ENCODE measurements at regions of chr20 and their contacts with region 1.

Region 1: DNA sequence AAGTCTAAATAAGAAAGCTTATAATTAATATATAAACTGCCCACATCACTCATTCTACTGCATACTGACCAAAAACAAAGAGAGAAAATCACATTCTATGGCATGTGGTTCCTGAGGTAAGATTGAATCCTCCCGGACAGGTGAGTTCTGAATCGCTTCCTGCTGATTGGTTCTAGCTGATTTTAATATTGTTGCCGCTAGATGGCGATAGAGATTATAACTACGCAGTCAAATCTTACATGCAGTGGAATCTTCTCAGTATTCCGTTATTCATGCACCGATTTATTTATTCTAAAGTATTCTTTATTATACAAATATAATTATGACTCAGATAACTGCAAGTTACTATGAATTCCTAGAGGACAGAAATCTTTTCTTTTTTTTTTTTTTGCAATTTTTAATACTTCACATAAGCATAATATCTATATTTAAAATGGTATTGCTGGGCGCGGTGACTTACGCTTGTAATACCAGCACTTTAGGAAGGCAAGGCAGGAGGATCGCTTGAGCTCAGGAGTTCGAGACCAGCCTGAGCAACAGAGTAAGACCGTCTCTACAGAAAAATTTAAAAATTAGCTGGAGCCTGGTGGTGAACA is 24.2 kb upstream of the TMX4 start:
- DNase-seq: peak; percentile 44
- H3K4me3 ChIP-seq: no peak overlapping the region
- H3K27ac ChIP-seq: no peak overlapping the region
- H3K4me1 ChIP-seq: peaks cover 0 to 6% of the 10 kb centered on the region in 2 experiments; a peak in 2 of 4 replicates
- H3K27me3 ChIP-seq: no peaks in the 10 kb centered on the region
- CTCF ChIP-seq: peak; percentile 81
- EP300 ChIP-seq: no peak
- RAD21 ChIP-seq: peak; percentile 83

Region 2: DNA sequence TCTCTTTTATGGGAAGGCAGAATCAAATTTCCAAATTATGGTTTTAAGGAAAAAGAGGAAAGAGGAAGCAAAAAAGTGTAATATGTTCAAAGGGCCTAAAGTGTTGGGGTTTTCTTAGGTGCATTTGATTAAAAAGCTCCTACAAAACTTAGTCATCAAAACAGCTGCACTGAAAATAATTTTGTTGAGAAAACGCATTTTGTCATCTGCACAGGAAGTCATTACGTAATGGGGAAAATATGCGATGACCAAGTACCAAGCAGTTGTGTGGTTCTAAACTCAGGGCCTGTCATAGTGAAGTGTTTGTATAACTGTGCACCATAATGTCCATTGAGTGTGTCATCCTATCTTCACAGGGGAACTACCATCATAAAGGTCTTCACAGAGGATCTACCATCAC is 119.1 kb before region 1 on chr20:
- CTCF ChIA-PET with region 1: no interaction called
- POLR2A ChIA-PET with region 1: no interaction called
- DNase-seq: no peak
- H3K4me3 ChIP-seq: no peak overlapping the region
- H3K27ac ChIP-seq: no peak overlapping the region; a peak in 1 of 4 replicates
- H3K4me1 ChIP-seq: peaks cover 0 to 11% of the 10 kb centered on the region in 2 experiments; a peak in 1 of 4 replicates
- H3K27me3 ChIP-seq: no peaks in the 10 kb centered on the region
- CTCF ChIP-seq: no peak
- EP300 ChIP-seq: 0 out of 4 replicates have a peak, but pooled peaks of 1 of the 2 experiments have one; percentile 13
- RAD21 ChIP-seq: no peak

Region 3: DNA sequence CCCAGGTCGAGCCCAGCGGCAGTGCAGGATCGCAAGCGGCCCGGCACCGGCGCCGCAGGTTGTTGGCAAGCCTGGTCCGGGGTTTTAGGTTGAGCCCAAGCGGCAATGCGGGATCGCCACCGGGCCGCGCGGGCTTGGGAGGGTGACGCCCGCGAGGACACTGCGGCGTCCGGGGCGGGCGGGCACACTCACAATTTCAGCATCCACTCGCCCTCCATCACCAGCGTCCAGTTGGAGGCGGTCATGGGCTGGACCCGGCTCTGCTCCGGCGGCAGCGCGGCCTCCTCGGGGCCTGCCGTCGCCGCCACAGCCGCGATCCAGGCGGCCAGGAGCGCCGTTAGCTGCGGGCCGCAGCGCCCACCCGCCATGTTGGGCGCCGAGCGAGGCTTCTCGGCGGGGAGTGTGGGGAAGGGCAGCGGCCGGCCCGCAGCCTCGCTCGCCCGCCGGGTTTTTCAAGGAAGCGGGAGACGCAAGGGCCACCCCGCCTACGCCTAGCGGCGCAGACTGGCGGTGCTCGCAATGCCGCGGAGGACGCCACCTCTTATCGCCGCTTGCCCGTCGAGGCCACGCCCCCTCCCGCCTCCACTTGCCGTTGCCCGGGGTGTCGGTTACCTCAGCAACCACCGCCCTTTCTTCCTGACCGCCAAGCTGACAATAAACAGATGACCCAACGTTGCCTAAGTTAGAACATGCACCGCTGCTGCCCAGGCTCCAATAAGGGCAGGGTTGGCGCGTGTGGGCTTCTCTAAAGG is 24.4 kb before region 1 on chr20 and contains the start of gene TMX4:
- CTCF ChIA-PET with region 1: interaction called, 17 read pairs
- POLR2A ChIA-PET with region 1: no interaction called
- DNase-seq: peak; percentile 96
- H3K4me3 ChIP-seq: peak within 1 kb of the TSS; percentile 82 to 93
- H3K27ac ChIP-seq: peak within 1 kb of the TSS; percentile 84 to 98
- H3K4me1 ChIP-seq: peaks cover 16 to 18% of the 10 kb centered on the region in 2 experiments; a peak in 3 of 4 replicates
- H3K27me3 ChIP-seq: no peaks in the 10 kb centered on the region
- CTCF ChIP-seq: peak; percentile 52
- EP300 ChIP-seq: peak; percentile 5 to 77; a peak in 2 of 4 replicates
- RAD21 ChIP-seq: peak; percentile 18; the same call in 1 of the 2 replicates
- polyA plus RNA-seq, gene TMX4: 10.9 and 14.6 TPM in 2 replicates

Region 4: DNA sequence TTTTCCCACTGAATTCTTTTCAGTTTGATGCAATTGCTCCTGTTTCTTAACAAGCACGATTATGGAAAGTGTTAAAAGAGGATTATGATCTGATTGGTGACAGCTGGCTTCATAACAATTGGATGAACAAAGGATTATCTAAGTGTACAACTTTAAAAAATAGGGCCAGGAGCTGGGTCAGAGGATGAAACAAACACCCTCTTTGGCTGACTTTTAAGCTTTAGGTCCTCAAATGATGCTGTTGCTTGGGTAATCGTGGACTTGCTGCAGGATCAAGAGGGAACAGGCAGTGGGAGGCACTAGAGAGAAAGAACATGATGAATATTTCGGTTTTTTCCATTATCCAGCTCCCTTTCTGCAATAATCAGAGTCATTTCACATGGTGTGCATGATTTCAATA is 11.3 kb after region 1 on chr20:
- CTCF ChIA-PET with region 1: interaction called, 10 read pairs
- POLR2A ChIA-PET with region 1: no interaction called
- DNase-seq: no peak
- H3K4me3 ChIP-seq: no peak overlapping the region
- H3K27ac ChIP-seq: no peak overlapping the region
- H3K4me1 ChIP-seq: no peaks in the 10 kb centered on the region
- H3K27me3 ChIP-seq: no peaks in the 10 kb centered on the region
- CTCF ChIP-seq: no peak
- EP300 ChIP-seq: no peak
- RAD21 ChIP-seq: no peak

Region 5: DNA sequence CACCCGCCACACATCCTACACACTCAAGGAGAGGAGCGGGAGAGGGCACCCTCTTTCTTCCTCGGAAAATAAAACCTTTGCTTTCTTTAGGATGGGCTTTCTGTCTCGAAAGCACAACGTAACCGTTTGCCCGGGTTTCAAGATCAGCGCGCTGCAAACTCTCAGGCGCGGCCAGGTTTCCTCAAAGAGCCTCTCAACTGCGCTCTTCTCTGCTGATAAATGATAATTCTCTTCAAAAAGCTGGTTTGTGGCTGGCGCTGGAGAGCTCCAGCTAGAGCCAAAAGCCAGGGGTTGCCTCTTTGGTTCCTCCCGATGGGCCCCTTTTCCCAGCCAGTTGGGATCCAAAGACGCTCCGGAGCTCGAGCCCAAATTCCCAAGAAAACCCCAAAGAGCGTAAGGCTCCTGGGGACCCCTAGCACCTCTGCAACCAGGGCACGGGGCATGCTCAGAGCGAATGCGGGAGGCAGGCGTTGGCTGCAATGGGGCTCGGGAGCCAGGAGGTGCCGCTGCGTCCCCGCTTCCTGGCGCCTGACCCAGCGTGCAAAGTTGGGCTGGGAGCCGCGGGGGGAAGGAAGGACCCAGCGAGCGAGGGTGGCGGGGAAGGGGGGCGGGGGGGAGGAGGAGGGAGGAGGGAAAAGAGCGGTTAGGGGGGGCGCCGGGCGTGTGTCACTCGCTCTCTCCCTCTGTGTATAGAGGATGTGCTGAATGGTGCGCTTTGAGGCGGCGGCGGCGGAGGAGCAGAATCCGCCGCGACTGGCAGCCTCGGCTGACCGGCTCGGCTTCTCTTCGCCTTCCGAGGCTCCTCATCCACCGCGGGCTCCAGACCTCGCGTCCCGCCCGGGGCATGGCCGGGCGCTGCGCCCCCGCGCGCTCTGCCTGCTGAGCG is 88.1 kb after region 1 on chr20 and contains the start of gene PLCB1:
- CTCF ChIA-PET with region 1: interaction called, 16 read pairs
- POLR2A ChIA-PET with region 1: no interaction called
- DNase-seq: peak; percentile 96
- H3K4me3 ChIP-seq: peak within 1 kb of the TSS; percentile 82 to 84
- H3K27ac ChIP-seq: peak within 1 kb of the TSS; percentile 50 to 86; a peak in 3 of 4 replicates
- H3K4me1 ChIP-seq: peaks cover 17% of the 10 kb centered on the region in 2 experiments; a peak in 3 of 4 replicates
- H3K27me3 ChIP-seq: no peaks in the 10 kb centered on the region
- CTCF ChIP-seq: peak; percentile 82
- EP300 ChIP-seq: 0 out of 4 replicates have a peak, but pooled peaks of 1 of the 2 experiments have one; percentile 12
- RAD21 ChIP-seq: peak; percentile 90
- polyA plus RNA-seq, gene PLCB1: 10.5 and 13.0 TPM in 2 replicates

Region 6: DNA sequence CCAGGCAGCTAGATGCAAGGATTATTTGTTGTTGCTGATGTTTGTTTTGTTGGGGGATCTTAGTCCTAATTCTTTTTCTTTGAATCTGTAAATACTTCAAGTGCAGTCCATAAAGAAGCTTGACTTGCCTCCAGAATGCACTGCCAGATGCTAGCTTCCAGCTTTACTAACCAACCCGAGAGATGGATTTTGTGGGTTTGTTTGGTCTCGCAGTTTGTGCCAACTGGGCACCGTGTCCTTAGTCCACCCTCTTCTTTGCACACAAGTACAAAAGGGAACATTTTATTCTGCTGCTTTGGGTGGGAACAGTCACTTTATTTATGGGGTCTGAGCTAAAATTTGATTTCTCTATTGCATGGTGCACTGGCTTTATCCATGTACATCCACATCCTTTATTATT is 300.3 kb after region 1 on chr20:
- CTCF ChIA-PET with region 1: no interaction called
- POLR2A ChIA-PET with region 1: no interaction called
- DNase-seq: no peak
- H3K4me3 ChIP-seq: no peak overlapping the region
- H3K27ac ChIP-seq: no peak overlapping the region
- H3K4me1 ChIP-seq: peaks cover 0 to 10% of the 10 kb centered on the region in 2 experiments; a peak in 2 of 4 replicates
- H3K27me3 ChIP-seq: no peaks in the 10 kb centered on the region
- CTCF ChIP-seq: no peak
- EP300 ChIP-seq: no peak
- RAD21 ChIP-seq: no peak

Region 7: GRCh38 chr20:8389381-8390036 is 345.7 kb after region 1 on chr20:
- CTCF ChIA-PET with region 1: interaction called, 11 read pairs
- POLR2A ChIA-PET with region 1: no interaction called
- DNase-seq: peak; percentile 27
- H3K4me3 ChIP-seq: no peak overlapping the region; a peak in 1 of 4 replicates
- H3K27ac ChIP-seq: peak overlapping the region; percentile 58 to 88
- H3K4me1 ChIP-seq: peaks cover 14 to 22% of the 10 kb centered on the region in 2 experiments; a peak in 3 of 4 replicates
- H3K27me3 ChIP-seq: no peaks in the 10 kb centered on the region
- CTCF ChIP-seq: peak; percentile 70
- EP300 ChIP-seq: 0 out of 4 replicates have a peak, but pooled peaks of 1 of the 2 experiments have one; percentile 14
- RAD21 ChIP-seq: peak; percentile 64

Region 8: GRCh38 chr20:8709627-8710026 is 665.8 kb after region 1 on chr20:
- CTCF ChIA-PET with region 1: interaction called, 11 read pairs
- POLR2A ChIA-PET with region 1: no interaction called
- DNase-seq: no peak
- H3K4me3 ChIP-seq: no peak overlapping the region
- H3K27ac ChIP-seq: no peak overlapping the region
- H3K4me1 ChIP-seq: no peaks in the 10 kb centered on the region
- H3K27me3 ChIP-seq: no peaks in the 10 kb centered on the region
- CTCF ChIP-seq: no peak
- EP300 ChIP-seq: no peak
- RAD21 ChIP-seq: no peak

Measured in SK-N-SH (cell line).